SK-N-SH (cell line): ENCODE measurements at regions of chr19 and their contacts with region 1.

Region 1: DNA sequence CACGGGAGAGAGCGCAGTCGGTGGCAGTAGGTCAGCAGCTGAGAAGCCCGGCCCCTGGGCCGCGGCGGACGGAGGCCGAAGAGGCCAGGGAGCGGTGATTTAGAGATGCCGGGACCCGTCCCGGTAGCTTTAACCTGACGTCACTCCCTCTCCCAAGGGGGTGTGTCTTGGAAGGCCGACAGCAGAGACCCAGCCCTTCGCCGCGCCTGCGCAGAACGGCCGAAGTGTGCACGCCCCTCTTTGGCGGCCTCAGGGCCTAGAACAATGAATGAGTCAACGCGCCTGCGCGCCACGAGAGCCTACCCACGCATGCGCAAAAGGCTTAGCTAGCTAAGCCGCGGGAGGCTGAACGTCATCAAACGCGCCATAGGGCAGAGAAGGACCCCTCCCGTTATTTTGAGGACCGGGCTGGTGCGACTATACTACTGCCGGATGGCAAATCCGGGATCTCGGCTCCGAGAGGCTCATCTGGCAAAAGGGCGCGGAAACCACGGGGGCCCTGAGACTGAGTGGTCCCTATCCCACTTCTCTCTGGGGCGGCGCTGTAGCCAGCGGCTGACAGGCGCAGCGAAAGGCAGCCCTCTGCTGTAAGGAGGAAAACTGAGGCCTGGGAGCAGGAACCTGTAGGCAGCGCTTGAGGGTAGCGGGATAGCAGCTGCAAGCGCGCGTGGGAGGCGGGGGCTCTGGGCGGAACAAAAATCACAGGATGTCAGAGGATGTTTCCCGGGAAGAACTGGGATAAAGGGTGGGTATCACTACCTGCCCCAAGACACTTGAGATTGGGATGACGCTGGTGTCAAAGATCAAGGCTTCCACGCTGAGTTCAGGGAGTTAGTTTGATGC is at the starts of genes IRGQ and ZNF576:
- DNase-seq: peak; percentile 97
- H3K4me3 ChIP-seq: peak within 1 kb of the TSS; percentile 72 to 98
- H3K27ac ChIP-seq: peak within 1 kb of the TSS; percentile 93 to 98
- H3K4me1 ChIP-seq: peaks cover 8 to 22% of the 10 kb centered on the region in 2 experiments; a peak in 2 of 4 replicates
- H3K27me3 ChIP-seq: no peaks in the 10 kb centered on the region
- CTCF ChIP-seq: no peak
- EP300 ChIP-seq: no peak; a peak in 1 of 4 replicates
- RAD21 ChIP-seq: no peak
- polyA plus RNA-seq, gene IRGQ: 8.4 and 10.8 TPM in 2 replicates
- polyA plus RNA-seq, gene ZNF576: 12.8 and 13.6 TPM in 2 replicates

Region 2: DNA sequence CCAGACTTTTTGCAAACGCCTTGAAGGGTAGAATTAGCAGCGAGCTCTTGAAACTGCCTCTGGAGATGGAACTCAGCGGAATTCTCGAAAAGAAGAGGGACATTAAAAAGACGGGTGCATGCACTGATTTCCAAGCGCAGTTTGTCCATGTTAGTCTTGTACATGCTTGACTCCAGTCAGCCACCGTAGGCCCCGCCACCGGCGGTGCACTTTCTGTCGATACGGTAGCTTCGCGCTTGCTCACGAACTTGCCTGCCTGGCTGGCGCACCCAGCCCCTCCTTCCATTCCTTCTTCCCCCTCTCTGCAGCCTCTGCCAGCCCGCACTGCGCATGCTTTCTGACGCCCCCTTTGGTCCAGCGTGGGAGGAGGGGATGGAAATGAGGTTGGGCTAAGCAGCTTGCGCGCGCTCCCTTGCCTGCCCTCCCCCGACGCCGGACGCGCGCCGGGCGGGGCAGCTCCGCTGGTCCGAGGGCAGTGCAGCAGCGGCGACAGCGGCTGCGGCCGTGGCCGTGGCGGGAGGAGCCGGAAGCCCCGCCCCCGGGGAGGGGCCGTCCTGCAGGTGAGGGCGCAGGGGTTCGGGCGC is 63.2 kb before region 1 on chr19 and contains the start of gene ZNF575:
- CTCF ChIA-PET with region 1: interaction called, 27 read pairs
- POLR2A ChIA-PET with region 1: interaction called, 3 read pairs
- DNase-seq: peak; percentile 93
- H3K4me3 ChIP-seq: peak within 1 kb of the TSS; percentile 59 to 63
- H3K27ac ChIP-seq: peak within 1 kb of the TSS; percentile 78 to 95
- H3K4me1 ChIP-seq: peaks cover 0 to 10% of the 10 kb centered on the region in 2 experiments; a peak in 1 of 4 replicates
- H3K27me3 ChIP-seq: no peaks in the 10 kb centered on the region
- CTCF ChIP-seq: no peak
- EP300 ChIP-seq: no peak; a peak in 1 of 4 replicates
- RAD21 ChIP-seq: no peak
- polyA plus RNA-seq, gene ZNF575: 0.31 and 1.0 TPM in 2 replicates

Region 3: GRCh38 chr19:43575156-43575950 is 20.9 kb before region 1 on chr19 and contains the starts of genes PINLYP and XRCC1:
- CTCF ChIA-PET with region 1: interaction called, 15 read pairs
- POLR2A ChIA-PET with region 1: interaction called, 4 read pairs
- DNase-seq: peak; percentile 95
- H3K4me3 ChIP-seq: peak within 1 kb of the TSS; percentile 75 to 91
- H3K27ac ChIP-seq: peak within 1 kb of the TSS; percentile 80 to 87
- H3K4me1 ChIP-seq: peaks cover 0 to 15% of the 10 kb centered on the region in 2 experiments; a peak in 1 of 4 replicates
- H3K27me3 ChIP-seq: no peaks in the 10 kb centered on the region
- CTCF ChIP-seq: no peak
- EP300 ChIP-seq: peak in 1 of 2 experiments; percentile 47; a peak in 1 of 4 replicates
- RAD21 ChIP-seq: no peak
- polyA plus RNA-seq, gene PINLYP: 5.5 and 6.5 TPM in 2 replicates
- polyA plus RNA-seq, gene XRCC1: 24.7 and 30.3 TPM in 2 replicates

Region 4: GRCh38 chr19:43584484-43584883 is 11.7 kb before region 1 on chr19:
- CTCF ChIA-PET with region 1: interaction called, 25 read pairs
- POLR2A ChIA-PET with region 1: interaction called, 4 read pairs
- DNase-seq: no peak
- H3K4me3 ChIP-seq: no peak overlapping the region
- H3K27ac ChIP-seq: no peak overlapping the region
- H3K4me1 ChIP-seq: peaks cover 0 to 20% of the 10 kb centered on the region in 2 experiments; a peak in 1 of 4 replicates
- H3K27me3 ChIP-seq: no peaks in the 10 kb centered on the region
- CTCF ChIP-seq: no peak
- EP300 ChIP-seq: no peak
- RAD21 ChIP-seq: no peak

Region 5: GRCh38 chr19:43624933-43625332 is 28.7 kb after region 1 on chr19:
- CTCF ChIA-PET with region 1: no interaction called
- POLR2A ChIA-PET with region 1: no interaction called
- DNase-seq: no peak
- H3K4me3 ChIP-seq: no peak overlapping the region
- H3K27ac ChIP-seq: no peak overlapping the region
- H3K4me1 ChIP-seq: peaks cover 0 to 6% of the 10 kb centered on the region in 2 experiments; a peak in 1 of 4 replicates
- H3K27me3 ChIP-seq: no peaks in the 10 kb centered on the region
- CTCF ChIP-seq: no peak
- EP300 ChIP-seq: no peak
- RAD21 ChIP-seq: no peak